Right ventricle myocardium inferior (tissue), 1 donor: ENCODE measurements at regions of chr4 and their contacts with region 1.

Region 1: DNA sequence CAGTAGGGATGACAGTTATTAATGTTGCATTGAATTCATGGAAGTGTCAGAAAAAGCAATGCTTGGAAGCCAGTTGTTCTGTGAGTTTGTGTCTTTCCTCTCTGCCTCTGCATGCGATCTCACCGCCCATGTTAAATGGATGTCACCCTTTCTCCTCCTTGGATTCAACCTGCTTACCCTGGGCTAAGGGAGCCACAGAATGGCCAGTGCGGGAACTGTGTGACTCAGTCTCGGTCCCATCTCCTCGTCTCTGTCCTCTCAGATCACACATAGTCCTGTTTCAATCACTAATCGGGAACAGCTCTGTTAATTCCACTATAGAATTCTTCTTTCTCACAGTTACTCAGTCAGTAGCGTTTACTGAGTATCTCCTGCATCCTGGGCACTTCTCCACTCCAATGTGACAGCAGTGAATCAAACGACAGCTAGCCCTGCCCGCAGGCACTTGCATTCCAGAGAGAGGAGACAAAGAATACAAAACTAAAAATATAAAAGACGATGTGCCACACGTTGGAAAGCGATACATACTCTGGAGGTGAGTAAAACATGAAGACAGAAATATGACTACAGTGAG is 53.7 kb upstream of the TLR3 start:
- DNase-seq: no peak
- ATAC-seq: peak; percentile 85

Region 2: DNA sequence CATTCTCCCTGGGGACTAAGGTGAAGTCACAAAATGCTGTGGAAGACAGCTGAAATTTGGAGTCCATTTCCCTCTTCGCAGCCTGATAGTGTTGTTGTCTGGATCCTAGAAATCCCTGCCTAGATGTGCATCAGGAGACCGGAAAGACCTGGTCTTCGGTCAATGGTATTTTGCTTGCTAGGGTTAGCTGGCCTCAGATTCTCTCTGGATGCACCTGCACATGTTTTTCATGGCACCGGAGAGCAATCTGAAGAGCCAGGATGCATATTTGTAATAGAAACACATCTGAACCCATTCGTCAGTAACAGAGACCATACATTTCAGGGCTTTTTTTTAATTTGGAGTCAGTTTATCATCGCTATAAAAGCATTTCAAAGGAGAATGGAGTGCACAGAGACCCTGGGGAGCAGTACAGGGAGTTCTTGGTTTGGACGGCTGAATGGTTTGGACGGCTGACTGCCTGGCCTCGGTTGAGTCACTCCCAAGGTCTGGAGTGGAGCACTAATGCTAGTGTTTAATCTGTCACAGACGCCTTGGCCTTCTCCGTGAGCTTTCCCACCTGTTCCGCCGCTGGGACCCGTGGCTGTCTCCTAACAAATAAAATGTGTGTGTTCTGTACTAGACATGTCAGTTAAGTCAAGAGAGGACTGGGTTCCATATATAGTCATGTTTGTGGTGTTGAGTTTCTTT is 472.5 kb before region 1 on chr4:
- intact Hi-C with region 1: no loop called
- DNase-seq: peak; percentile 84
- ATAC-seq: peak; percentile 94

Region 3: DNA sequence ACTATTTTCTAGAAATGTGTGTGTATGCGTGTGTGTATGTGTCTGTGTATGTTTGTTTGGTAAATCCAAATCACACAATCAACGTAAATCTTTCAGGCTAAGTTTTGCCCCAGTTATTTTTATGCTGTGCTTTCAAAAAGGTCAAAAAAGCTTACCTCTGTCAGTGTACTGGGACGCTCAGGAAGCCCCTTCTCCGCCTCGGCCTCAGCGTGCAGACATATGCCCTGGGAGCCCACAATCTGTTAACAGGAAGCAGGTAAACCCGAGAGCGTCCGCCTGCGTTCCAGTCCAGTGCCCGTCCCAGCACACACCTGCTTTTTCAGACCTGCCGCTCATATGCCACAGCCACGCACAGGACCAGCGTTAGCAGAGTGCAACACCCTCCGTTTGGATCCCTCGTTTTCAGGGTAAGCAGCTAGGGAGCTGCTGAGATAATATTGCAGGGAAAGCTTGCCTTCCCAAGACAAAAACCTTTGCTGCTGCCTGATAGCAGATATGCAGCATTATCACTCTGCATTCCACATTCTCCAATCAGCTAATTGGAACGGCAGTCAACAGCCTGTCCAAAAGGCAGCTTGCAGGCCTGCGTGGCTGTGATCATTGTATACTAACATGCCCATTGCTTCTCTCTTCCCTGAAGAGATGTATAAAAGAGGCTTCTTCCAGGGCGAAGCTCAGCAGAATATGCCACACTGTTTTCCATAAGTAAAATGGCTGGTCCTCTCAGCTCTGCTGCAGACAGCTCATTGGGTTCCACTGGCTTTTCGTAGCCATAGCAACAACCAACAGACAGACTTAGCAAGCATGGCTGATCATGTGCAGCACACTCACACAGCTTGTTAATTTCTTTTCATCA is 203.6 kb before region 1 on chr4 and contains the start of gene SORBS2:
- intact Hi-C with region 1: loop called (anchors 5 kb)
- DNase-seq: no peak
- ATAC-seq: peak; percentile 74
- total RNA-seq, gene SORBS2: 828 TPM

Region 4: DNA sequence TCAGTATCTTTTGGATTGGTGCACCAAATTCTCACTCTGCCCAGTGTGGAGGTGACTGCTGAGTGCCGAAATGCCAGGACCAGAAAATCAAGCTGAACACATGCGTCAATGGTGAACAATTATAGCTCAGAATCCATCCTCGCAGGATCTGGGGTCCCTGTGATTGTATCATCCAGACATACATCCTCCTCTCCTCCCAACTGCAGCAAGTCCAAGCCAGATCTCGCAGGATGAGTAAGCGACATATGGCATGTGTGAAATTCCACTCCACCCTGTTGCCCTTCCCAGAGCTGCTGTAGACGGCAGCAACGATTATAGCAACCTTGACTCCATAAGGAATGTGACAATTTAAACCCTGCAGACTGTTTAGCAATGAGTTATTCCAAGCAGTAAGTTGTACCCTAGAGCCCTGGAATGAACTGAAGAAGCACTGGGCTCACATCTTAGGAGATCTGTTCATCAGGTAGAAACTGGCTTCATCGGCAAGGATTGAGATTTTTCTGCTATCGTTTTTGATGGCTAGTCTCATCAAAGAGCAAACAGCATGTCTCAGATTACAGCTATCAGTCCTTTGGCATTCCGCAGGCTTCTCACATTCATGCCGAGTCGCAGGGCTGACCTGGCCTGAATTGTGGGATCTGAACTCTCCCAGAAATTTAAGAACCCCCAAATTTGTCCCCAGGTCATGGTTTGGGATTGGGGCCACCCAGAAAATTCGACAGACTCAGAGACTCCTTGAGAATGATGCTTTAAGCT is 167.8 kb before region 1 on chr4:
- intact Hi-C with region 1: loop called (anchors 5 kb)
- DNase-seq: peak; percentile 80
- ATAC-seq: peak; percentile 87

Region 5: GRCh38 chr4:185865901-185866328 is 149.4 kb before region 1 on chr4:
- intact Hi-C with region 1: loop called (anchors 5 kb)
- DNase-seq: no peak
- ATAC-seq: peak; percentile 68